Activated CD4-positive, alpha-beta T cell treated with anti-CD3 and anti-CD28 coated beads, Interleukin-2, amount 10 ng/mL, durations not matched to agents 24 days and 14 days (primary cell): ENCODE measurements at regions of chr6 and their contacts with region 1.

Region 1: GRCh38 chr6:71288228-71289001 is at the start of gene OGFRL1:
- DNase-seq: peak; percentile 92
- H3K4me3 Mint-ChIP-seq: peak within 1 kb of the TSS; percentile 82
- H3K27ac Mint-ChIP-seq: peak within 1 kb of the TSS; percentile 68
- H3K4me1 Mint-ChIP-seq: peaks cover 30% of the 10 kb centered on the region
- H3K27me3 Mint-ChIP-seq: peaks cover 20% of the 10 kb centered on the region
- total RNA-seq, gene OGFRL1: 3.9 and 4.0 TPM in 2 replicates

Region 2: DNA sequence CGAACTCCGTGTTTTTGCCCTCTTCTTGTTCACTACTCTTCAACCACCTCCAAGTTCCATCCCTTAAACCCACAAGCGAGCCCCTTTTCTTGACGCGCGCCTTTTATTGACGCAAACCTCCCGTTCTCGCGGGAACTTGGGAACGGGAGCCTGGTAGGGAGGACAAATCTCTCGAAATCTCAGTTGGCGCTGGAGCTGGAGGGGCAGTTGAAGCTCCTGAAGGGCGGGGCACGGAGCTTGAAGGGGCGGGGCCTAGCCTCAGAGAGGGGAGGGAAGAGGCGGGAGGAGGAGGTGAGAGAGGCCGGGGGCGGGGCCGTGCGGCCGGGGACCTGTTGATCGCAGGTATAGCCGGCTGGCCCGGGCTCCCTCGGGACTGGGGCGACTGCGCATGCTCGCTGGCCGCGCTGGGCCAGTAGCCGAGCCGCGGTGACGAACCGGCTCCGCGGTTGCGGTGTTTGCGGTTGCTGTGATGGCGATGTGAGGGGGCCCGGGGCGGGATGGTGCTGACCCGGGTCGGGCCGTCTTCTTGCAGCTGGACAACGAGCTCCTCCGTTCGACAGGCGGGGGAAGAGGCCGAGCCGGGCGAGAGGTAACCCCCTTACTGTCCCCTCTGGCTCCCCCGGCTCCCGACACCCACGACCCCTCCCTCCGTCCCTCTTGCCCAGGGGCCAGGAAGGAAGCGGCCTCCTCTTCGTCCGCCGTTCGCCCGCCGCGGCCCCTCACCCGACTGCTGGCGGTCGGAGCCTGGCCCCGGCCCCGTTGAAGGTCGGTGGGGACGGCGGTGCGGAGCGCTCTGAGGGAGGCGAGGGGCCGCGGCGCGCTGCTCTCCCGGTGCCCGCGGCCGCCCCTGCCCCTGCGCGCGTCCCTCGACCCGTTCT is 875.1 kb before region 1 on chr6 and contains the start of gene FAM135A:
- intact Hi-C with region 1: loop called (anchors 10 kb)
- DNase-seq: peak; percentile 98
- H3K4me3 Mint-ChIP-seq: peak within 1 kb of the TSS; percentile 92
- H3K27ac Mint-ChIP-seq: peak within 1 kb of the TSS; percentile 87
- H3K4me1 Mint-ChIP-seq: peaks cover 27% of the 10 kb centered on the region
- H3K27me3 Mint-ChIP-seq: peaks cover 7% of the 10 kb centered on the region
- total RNA-seq, gene FAM135A: 7.7 and 10.5 TPM in 2 replicates

Region 3: DNA sequence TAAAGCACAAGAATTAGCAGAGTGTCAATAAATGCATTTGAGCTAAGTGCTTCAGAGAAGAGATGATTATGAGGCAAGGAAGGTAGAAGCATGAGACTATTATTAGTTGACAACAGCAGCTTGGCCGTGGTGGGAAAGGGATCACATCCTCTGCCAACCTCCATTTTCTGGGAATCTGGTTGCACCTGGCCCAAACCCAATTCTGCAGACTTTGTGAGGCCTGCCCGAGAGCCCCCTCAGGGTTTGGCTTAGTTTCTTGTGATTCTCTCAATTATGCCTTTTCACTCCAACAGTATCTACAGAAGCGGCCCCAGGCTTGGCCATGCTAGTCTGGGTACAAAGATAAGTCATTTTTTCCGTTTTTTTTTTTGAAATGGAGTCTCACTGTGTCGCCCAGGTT is 220.6 kb before region 1 on chr6:
- intact Hi-C with region 1: no loop called
- DNase-seq: no peak
- H3K4me3 Mint-ChIP-seq: no peak overlapping the region
- H3K27ac Mint-ChIP-seq: no peak overlapping the region
- H3K4me1 Mint-ChIP-seq: no peaks in the 10 kb centered on the region
- H3K27me3 Mint-ChIP-seq: peaks cover 2% of the 10 kb centered on the region

Region 4: GRCh38 chr6:71298459-71298858 is 10.0 kb after region 1 on chr6:
- intact Hi-C with region 1: loop called (anchors 1 kb)
- DNase-seq: no peak
- H3K4me3 Mint-ChIP-seq: no peak overlapping the region
- H3K27ac Mint-ChIP-seq: no peak overlapping the region
- H3K4me1 Mint-ChIP-seq: no peaks in the 10 kb centered on the region
- H3K27me3 Mint-ChIP-seq: no peaks in the 10 kb centered on the region

Region 5: DNA sequence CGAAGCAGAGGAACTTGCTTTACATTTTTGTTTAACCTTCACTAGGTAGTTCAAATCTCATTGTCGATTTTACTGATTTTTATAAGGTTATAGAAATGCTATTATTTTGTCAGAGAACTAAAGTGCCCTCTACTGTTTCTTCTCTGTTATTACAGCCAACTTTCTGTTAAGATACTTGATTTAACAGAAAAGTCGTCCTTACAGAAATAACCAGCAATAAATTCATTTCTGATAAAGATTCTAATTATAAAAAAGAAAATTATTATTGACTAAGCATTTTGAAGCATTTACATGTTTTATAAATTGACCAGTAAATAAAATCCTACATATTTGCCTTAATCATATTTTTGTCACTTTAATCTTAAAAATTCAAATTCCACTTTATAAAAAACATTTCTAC is 61.0 kb after region 1 on chr6:
- intact Hi-C with region 1: loop called (anchors 5 kb)
- DNase-seq: no peak
- H3K4me3 Mint-ChIP-seq: no peak overlapping the region
- H3K27ac Mint-ChIP-seq: no peak overlapping the region
- H3K4me1 Mint-ChIP-seq: no peaks in the 10 kb centered on the region
- H3K27me3 Mint-ChIP-seq: peaks cover 7% of the 10 kb centered on the region